ENCODE measurements at regions of chr6 and their contacts with region 1.

Region 1: GRCh38 chr6:52419809-52420670 is at the start of gene EFHC1:
- DNase-seq: peak; percentile 77
- H3K4me3 ChIP-seq: peak within 1 kb of the TSS; percentile 71 to 88 (median 79)
- H3K27ac ChIP-seq: peak within 1 kb of the TSS; percentile 85
- H3K4me1 ChIP-seq: peaks cover 45% of the 10 kb centered on the region
- H3K27me3 ChIP-seq: no peaks in the 10 kb centered on the region
- CTCF ChIP-seq: no peak
- polyA plus RNA-seq, gene EFHC1: 9.6 to 20.5 TPM (median 15.8 TPM) in 3 replicates

Region 2: GRCh38 chr6:52664186-52664990 is 244.3 kb after region 1 on chr6:
- dilution Hi-C with region 1: loop called (anchors 25 kb)
- DNase-seq: peak; percentile 54
- H3K4me3 ChIP-seq: peak overlapping the region; percentile 57 to 91 (median 81)
- H3K27ac ChIP-seq: no peak overlapping the region
- H3K4me1 ChIP-seq: peaks cover 5% of the 10 kb centered on the region
- H3K27me3 ChIP-seq: no peaks in the 10 kb centered on the region
- CTCF ChIP-seq: no peak

Measured in keratinocyte (primary cell).